H1 (cell line): ENCODE measurements at regions of chr22 and their contacts with region 1.

Region 1: GRCh38 chr22:42090596-42091454 is at the start of gene NDUFA6:
- DNase-seq: peak; percentile 95 to 99
- H3K4me3 ChIP-seq: peak within 1 kb of the TSS; percentile 72 to 93 (median 92)
- H3K27ac ChIP-seq: peak within 1 kb of the TSS; percentile 90
- H3K4me1 ChIP-seq: peaks cover 0 to 5% (median 1%) of the 10 kb centered on the region in 4 experiments; a peak in 2 of 7 replicates
- H3K27me3 ChIP-seq: 0 out of 7 replicates have a peak, but pooled peaks cover 0 to 2% (median 0%) of the 10 kb centered on the region in 4 experiments
- CTCF ChIP-seq: peak; percentile 84 to 92 (median 86)
- EP300 ChIP-seq: 0 out of 3 replicates have a peak, but pooled peaks of 1 of the 2 experiments have one; percentile 24
- POLR2A ChIP-seq: peak; percentile 92 to 97
- RAD21 ChIP-seq: peak; percentile 69 to 76
- total RNA-seq, gene NDUFA6: 99.5 and 105 TPM in 2 replicates

Region 2: DNA sequence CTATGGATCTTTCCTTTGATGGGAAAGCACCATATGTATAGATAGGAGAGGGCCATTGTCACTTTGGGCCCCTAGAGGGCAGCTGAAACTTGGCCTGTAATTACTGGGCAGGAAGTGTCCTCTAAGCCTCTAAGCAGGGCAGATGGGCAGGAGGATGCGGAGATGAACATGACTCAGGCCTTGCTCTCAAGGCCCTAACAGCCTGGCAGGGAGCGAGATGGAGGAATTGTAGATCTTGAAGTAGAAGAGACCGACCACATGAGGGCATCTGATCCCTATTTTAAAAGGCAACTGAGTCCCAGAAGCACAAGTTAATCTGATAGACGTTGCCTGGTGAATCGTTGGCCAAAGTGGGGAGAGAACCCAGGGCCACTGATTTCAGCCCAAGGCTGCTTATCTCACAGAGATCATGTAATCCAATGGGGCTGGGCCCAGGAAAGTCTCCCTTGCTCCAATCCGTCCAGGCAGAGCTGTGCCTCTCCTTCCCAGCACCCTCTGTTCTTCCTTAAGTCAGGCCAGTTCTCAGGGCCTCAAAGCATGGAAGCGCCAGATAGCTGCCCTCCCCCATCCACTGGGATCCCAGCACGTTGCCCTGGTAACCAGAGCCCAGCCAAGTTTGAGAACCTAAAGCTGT is 124.1 kb before region 1 on chr22:
- CTCF ChIA-PET with region 1: interaction called, 27 read pairs
- POLR2A ChIA-PET with region 1: interaction called, 13 read pairs
- DNase-seq: peak in 1 of 2 experiments; percentile 62
- H3K4me3 ChIP-seq: no peak overlapping the region
- H3K27ac ChIP-seq: no peak overlapping the region
- H3K4me1 ChIP-seq: peaks cover 1 to 18% (median 4%) of the 10 kb centered on the region in 4 experiments; a peak in 6 of 7 replicates
- H3K27me3 ChIP-seq: no peaks in the 10 kb centered on the region; a peak in 2 of 7 replicates
- CTCF ChIP-seq: peak; percentile 18 to 63 (median 56)
- EP300 ChIP-seq: no peak
- POLR2A ChIP-seq: no peak
- RAD21 ChIP-seq: peak; percentile 75 to 80

Region 3: DNA sequence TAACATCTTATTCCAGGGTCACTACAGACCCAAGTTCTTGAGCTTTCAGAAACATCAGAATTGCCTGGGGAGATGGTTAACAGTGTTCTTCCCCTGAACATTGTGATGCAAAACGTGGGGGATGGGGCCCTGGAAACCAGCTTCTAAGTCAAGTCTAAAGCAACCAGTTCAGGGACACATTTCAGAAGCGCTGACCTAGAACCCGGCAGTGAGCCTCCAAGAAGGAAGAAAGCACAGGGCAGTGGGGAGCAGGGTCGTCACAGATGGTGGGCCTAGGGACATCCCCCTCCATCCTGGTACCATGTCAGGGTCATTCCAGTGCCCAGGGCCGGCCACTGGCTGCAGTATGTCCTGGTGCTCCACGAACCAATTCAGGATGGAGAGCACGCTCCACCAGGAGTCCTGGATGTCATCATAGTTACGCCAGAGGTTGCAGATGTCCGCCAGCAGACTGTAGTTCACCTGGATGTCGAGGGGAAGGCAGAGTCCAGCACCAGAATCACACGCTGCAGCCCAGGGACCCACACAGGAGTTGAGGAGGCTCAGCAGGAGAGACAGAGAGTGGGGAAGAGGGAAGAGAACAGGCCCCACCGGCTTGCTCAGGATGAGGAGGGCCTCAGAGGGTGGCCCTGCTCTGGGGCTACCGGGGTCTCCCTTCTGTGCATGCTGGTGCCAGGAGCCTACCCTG is 25.2 kb before region 1 on chr22:
- CTCF ChIA-PET with region 1: interaction called, 5 read pairs
- POLR2A ChIA-PET with region 1: interaction called, 24 read pairs
- DNase-seq: peak in 1 of 2 experiments; percentile 58
- H3K4me3 ChIP-seq: peak overlapping the region in 1 of 4 experiments; percentile 22; a peak in 2 of 8 replicates
- H3K27ac ChIP-seq: peak overlapping the region; percentile 23; the same call in 1 of the 2 replicates
- H3K4me1 ChIP-seq: peaks cover 0 to 21% (median 11%) of the 10 kb centered on the region in 4 experiments; a peak in 5 of 7 replicates
- H3K27me3 ChIP-seq: no peaks in the 10 kb centered on the region; a peak in 1 of 7 replicates
- CTCF ChIP-seq: no peak
- EP300 ChIP-seq: no peak; a peak in 1 of 3 replicates
- POLR2A ChIP-seq: no peak
- RAD21 ChIP-seq: no peak

Region 4: GRCh38 chr22:42070517-42071422 is 20.1 kb before region 1 on chr22 and contains the start of gene NAGA:
- CTCF ChIA-PET with region 1: interaction called, 11 read pairs
- POLR2A ChIA-PET with region 1: interaction called, 94 read pairs
- DNase-seq: peak; percentile 91 to 94
- H3K4me3 ChIP-seq: peak within 1 kb of the TSS; percentile 36 to 71 (median 62)
- H3K27ac ChIP-seq: peak within 1 kb of the TSS; percentile 86
- H3K4me1 ChIP-seq: peaks cover 2 to 25% (median 12%) of the 10 kb centered on the region in 4 experiments
- H3K27me3 ChIP-seq: peaks cover 0 to 9% (median 4%) of the 10 kb centered on the region in 4 experiments; a peak in 2 of 7 replicates
- CTCF ChIP-seq: no peak
- EP300 ChIP-seq: no peak
- POLR2A ChIP-seq: peak in 1 of 2 experiments; percentile 84; a peak in 2 of 3 replicates
- RAD21 ChIP-seq: no peak
- total RNA-seq, gene NAGA: 14.7 and 14.8 TPM in 2 replicates

Region 5: DNA sequence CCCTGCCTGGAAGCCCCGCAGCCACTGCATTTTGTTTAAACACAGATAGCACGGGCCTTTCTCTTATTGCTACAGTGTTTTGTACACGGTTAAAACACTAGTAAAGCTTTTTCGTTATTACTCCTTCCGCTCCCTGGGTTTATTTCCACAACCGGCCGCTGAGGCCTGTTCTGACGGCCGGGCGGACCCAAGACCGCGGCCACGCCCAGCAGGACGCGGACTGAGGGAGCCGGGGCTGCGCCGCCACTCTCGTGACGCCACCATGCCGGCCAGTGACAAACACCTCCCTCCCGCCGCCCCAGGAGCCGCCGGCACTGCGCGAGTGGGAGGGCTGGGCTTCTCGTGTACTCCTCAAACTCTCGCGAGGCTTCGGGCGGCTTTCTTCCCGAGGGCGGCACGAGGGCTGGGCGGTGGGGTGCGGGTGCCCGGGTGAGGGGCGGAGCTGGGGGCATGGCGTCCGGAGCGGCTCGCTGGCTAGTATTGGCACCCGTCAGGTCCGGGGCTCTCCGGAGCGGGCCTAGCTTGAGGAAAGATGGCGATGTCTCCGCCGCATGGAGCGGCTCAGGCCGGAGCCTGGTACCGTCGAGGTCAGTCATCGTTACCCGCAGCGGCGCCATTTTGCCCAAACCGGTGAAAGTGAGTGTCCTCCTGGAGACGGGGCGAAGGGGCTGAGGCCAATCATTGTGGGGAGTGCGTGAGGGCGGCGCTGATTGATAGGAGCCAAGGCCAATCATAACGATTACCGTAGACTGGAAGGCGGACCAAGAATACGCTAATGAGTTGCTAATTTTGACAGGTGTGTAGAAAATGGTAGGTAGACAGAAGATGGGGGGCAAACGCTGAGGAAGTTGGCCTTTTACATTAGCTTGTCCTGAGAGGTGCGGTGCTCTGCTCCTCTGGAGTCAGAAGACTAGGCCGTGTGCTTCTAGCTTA is 11.2 kb before region 1 on chr22 and contains the start of gene SMDT1:
- CTCF ChIA-PET with region 1: interaction called, 11 read pairs
- POLR2A ChIA-PET with region 1: interaction called, 94 read pairs
- DNase-seq: peak; percentile 90 to 96
- H3K4me3 ChIP-seq: peak within 1 kb of the TSS; percentile 65 to 87 (median 78)
- H3K27ac ChIP-seq: peak within 1 kb of the TSS; percentile 90
- H3K4me1 ChIP-seq: peaks cover 0 to 4% (median 2%) of the 10 kb centered on the region in 4 experiments; a peak in 5 of 7 replicates
- H3K27me3 ChIP-seq: no peaks in the 10 kb centered on the region
- CTCF ChIP-seq: no peak
- EP300 ChIP-seq: no peak
- POLR2A ChIP-seq: peak; percentile 75 to 83
- RAD21 ChIP-seq: no peak
- total RNA-seq, gene SMDT1: 35.6 and 36.0 TPM in 2 replicates

Region 6: GRCh38 chr22:42101199-42101598 is 10.4 kb after region 1 on chr22:
- CTCF ChIA-PET with region 1: interaction called, 21 read pairs
- POLR2A ChIA-PET with region 1: interaction called, 18 read pairs
- DNase-seq: no peak
- H3K4me3 ChIP-seq: no peak overlapping the region
- H3K27ac ChIP-seq: no peak overlapping the region
- H3K4me1 ChIP-seq: no peaks in the 10 kb centered on the region
- H3K27me3 ChIP-seq: peaks cover 0 to 2% (median 0%) of the 10 kb centered on the region in 4 experiments; a peak in 1 of 7 replicates
- CTCF ChIP-seq: no peak
- EP300 ChIP-seq: no peak
- POLR2A ChIP-seq: no peak
- RAD21 ChIP-seq: no peak

Region 7: GRCh38 chr22:42134100-42135020 is 43.5 kb after region 1 on chr22:
- CTCF ChIA-PET with region 1: no interaction called
- POLR2A ChIA-PET with region 1: no interaction called
- DNase-seq: no peak
- H3K4me3 ChIP-seq: no peak overlapping the region
- H3K27ac ChIP-seq: no peak overlapping the region
- H3K4me1 ChIP-seq: no peaks in the 10 kb centered on the region
- H3K27me3 ChIP-seq: no peaks in the 10 kb centered on the region
- CTCF ChIP-seq: no peak
- EP300 ChIP-seq: no peak
- POLR2A ChIP-seq: no peak
- RAD21 ChIP-seq: no peak